Activated CD4-positive, alpha-beta T cell treated with anti-CD3 and anti-CD28 coated beads for 36 hours (primary cell): ENCODE measurements at regions of chr13 and their contacts with region 1.

Region 1: GRCh38 chr13:21176220-21176982 is at the starts of genes MRPL57 and SKA3:
- DNase-seq: peak; percentile 96
- ATAC-seq: peak; percentile 96
- H3K4me3 Mint-ChIP-seq: peak within 1 kb of the TSS; percentile 98
- H3K27ac Mint-ChIP-seq: peak within 1 kb of the TSS; percentile 97
- H3K4me1 Mint-ChIP-seq: peaks cover 20% of the 10 kb centered on the region
- H3K27me3 Mint-ChIP-seq: no peaks in the 10 kb centered on the region
- total RNA-seq, gene MRPL57: 18.6 to 23.0 TPM
- total RNA-seq, gene SKA3: 40.7 to 53.7 TPM

Region 2: DNA sequence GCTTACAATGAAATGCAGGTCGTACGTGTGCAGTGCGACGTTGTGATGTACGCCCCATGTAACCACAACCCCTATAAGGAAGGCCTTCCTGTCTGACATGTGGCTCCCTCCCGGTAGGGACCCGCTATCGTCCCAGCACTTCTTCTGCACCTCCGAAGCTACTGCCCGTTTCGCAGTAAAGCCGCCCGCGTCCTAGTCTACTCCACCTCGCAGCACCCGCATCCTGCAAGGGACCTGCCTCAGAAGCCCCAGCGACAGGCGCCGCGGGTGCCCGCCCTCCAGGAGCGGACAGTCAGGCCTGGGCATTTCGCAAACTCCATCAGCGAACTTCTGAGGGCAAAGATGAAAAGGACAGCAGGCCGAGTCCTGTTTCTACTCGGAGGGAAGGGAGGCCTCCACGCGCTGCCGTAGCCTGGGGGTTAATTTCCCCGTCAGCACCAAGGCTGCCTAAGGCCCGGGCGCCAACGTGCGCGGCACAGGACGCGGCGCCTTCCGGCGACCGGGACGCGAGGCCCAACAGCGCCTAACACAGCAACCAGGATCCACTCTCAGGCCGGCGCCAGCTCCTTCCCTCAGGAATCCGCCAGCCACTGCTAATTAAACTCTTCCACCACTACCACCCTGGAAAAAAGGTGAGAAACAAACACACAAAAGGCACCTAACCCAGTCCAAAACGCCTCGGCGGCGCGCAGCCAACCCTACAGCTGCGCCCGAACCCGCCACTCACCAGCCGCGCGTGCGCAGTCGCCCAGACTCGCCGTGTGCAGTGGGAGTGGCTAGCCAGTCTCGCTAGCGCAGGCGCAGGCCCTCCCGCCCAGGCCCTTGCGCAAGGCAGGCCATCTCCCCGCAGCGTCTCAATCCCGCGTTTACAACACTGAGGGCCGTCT is 403.0 kb before region 1 on chr13 and contains the start of gene EEF1AKMT1:
- CTCF ChIA-PET with region 1: no interaction called
- POLR2A ChIA-PET with region 1: interaction called, 3 read pairs
- intact Hi-C with region 1: loop called in 1 of 2 experiments (anchors 1 kb)
- DNase-seq: peak; percentile 98
- ATAC-seq: peak; percentile 92
- H3K4me3 Mint-ChIP-seq: peak within 1 kb of the TSS; percentile 93
- H3K27ac Mint-ChIP-seq: peak within 1 kb of the TSS; percentile 100
- H3K4me1 Mint-ChIP-seq: peaks cover 45% of the 10 kb centered on the region
- H3K27me3 Mint-ChIP-seq: no peaks in the 10 kb centered on the region
- total RNA-seq, gene EEF1AKMT1: 21.0 to 23.9 TPM

Region 3: DNA sequence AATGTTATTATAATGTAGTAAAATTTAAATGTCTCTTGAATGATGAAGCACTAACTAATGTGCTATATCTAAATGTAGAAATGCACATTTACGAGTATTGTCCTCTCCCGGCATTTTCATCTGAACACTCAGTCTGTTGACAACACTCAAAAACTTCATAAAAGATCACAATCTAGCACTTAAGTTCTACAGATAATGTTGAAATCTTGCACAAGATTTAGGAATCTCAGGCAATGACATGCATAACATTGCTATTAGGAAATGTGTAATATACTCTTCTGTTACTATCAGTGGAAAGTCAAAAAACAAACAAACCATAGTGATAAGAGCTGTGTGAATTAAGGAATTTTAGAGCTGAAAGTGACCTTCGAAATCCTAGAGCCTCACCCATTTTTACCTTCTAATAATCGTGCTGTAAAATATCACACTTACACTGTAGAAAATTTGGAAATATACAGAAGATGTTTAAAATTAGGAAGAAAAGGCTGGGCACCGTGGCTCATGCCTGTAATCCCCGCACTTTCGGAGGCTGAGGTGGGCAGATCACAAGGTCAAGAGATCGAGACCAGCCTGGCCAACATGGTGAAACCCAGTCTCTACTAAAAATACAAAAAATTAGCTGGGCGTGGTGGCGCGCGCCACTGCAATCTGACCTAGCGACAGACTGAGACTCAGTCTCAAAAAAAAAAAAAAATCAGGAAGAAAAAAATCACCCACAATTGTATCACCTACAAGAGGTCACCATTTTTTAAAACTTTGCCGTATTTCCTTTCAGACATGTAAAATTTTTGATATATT is 236.1 kb before region 1 on chr13:
- CTCF ChIA-PET with region 1: interaction called, 9 read pairs
- POLR2A ChIA-PET with region 1: no interaction called
- intact Hi-C with region 1: loop called (anchors 1 kb)
- DNase-seq: no peak
- ATAC-seq: no peak
- H3K4me3 Mint-ChIP-seq: no peak overlapping the region
- H3K27ac Mint-ChIP-seq: no peak overlapping the region
- H3K4me1 Mint-ChIP-seq: no peaks in the 10 kb centered on the region
- H3K27me3 Mint-ChIP-seq: peaks cover 17% of the 10 kb centered on the region

Region 4: DNA sequence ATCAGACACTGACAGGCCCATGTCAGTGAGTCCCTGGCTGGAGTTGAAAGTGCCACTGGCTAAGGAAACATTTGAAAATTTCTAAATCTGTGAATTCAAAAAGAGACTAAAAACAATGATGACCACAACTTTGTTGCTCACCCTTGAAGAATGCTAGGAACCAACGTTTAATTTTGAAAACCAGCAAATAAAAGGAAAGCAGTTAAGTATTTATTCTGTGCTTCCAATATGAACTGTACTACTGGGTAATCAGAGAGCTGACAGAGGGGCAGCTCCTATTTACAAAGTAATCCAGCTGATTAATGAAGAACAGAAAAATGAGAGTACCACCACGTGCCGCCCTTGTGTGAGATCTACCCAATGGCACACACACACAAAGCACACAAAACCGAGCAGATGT is 70.3 kb before region 1 on chr13:
- CTCF ChIA-PET with region 1: interaction called, 4 read pairs
- POLR2A ChIA-PET with region 1: no interaction called
- intact Hi-C with region 1: loop called (anchors 1 to 2 kb)
- DNase-seq: no peak
- ATAC-seq: no peak
- H3K4me3 Mint-ChIP-seq: no peak overlapping the region
- H3K27ac Mint-ChIP-seq: no peak overlapping the region
- H3K4me1 Mint-ChIP-seq: peaks cover 3% of the 10 kb centered on the region
- H3K27me3 Mint-ChIP-seq: no peaks in the 10 kb centered on the region

Region 5: DNA sequence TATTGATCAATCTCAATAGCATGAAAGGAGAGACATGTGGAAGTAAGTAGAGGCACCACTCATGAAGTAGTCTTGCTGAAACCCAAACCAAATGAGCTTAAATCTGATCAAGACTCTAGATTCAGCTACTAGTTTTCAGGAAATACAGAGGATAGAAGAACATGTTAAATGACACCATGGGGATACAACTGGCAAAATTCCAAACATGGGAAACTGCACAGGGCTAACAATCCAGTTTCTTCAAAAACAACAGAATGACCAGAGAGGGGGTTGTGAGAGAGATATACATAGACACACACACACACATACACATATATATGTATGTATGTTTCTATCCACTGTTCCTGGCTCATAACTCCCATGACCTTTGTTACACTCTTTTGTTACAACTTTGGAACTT is 44.9 kb after region 1 on chr13:
- CTCF ChIA-PET with region 1: no interaction called
- POLR2A ChIA-PET with region 1: interaction called, 10 read pairs
- intact Hi-C with region 1: no loop called
- DNase-seq: no peak
- ATAC-seq: no peak
- H3K4me3 Mint-ChIP-seq: no peak overlapping the region
- H3K27ac Mint-ChIP-seq: no peak overlapping the region
- H3K4me1 Mint-ChIP-seq: peaks cover 17% of the 10 kb centered on the region
- H3K27me3 Mint-ChIP-seq: no peaks in the 10 kb centered on the region

Region 6: GRCh38 chr13:21458813-21459701 is 282.7 kb after region 1 on chr13 and contains the start of gene ZDHHC20:
- CTCF ChIA-PET with region 1: no interaction called
- POLR2A ChIA-PET with region 1: interaction called, 3 read pairs
- intact Hi-C with region 1: loop called in 1 of 2 experiments (anchors 1 kb)
- DNase-seq: peak; percentile 93
- ATAC-seq: peak; percentile 83
- H3K4me3 Mint-ChIP-seq: peak within 1 kb of the TSS; percentile 93
- H3K27ac Mint-ChIP-seq: peak within 1 kb of the TSS; percentile 88
- H3K4me1 Mint-ChIP-seq: peaks cover 25% of the 10 kb centered on the region
- H3K27me3 Mint-ChIP-seq: no peaks in the 10 kb centered on the region
- total RNA-seq, gene ZDHHC20: 40.2 to 44.9 TPM

Region 7: GRCh38 chr13:21603531-21604448 is 427.4 kb after region 1 on chr13 and contains the start of gene MICU2:
- CTCF ChIA-PET with region 1: no interaction called
- POLR2A ChIA-PET with region 1: interaction called, 3 read pairs
- intact Hi-C with region 1: loop called (anchors 1 to 2 kb)
- DNase-seq: peak; percentile 97
- ATAC-seq: peak; percentile 96
- H3K4me3 Mint-ChIP-seq: peak within 1 kb of the TSS; percentile 85
- H3K27ac Mint-ChIP-seq: peak within 1 kb of the TSS; percentile 94
- H3K4me1 Mint-ChIP-seq: peaks cover 35% of the 10 kb centered on the region
- H3K27me3 Mint-ChIP-seq: peaks cover 1% of the 10 kb centered on the region
- total RNA-seq, gene MICU2: 28.4 to 28.7 TPM